ENCODE measurements at regions of chr6 and their contacts with region 1.

Region 1: GRCh38 chr6:160930547-160931377 is 60.8 kb upstream of the MAP3K4 start:
- DNase-seq: peak; percentile 64
- H3K4me3 ChIP-seq: peak overlapping the region; percentile 51
- CTCF ChIP-seq: peak; percentile 71

Region 2: GRCh38 chr6:160859822-160860221 is 70.9 kb before region 1 on chr6:
- in situ Hi-C with region 1: no loop called
- DNase-seq: no peak
- H3K4me3 ChIP-seq: no peak overlapping the region
- CTCF ChIP-seq: no peak

Region 3: DNA sequence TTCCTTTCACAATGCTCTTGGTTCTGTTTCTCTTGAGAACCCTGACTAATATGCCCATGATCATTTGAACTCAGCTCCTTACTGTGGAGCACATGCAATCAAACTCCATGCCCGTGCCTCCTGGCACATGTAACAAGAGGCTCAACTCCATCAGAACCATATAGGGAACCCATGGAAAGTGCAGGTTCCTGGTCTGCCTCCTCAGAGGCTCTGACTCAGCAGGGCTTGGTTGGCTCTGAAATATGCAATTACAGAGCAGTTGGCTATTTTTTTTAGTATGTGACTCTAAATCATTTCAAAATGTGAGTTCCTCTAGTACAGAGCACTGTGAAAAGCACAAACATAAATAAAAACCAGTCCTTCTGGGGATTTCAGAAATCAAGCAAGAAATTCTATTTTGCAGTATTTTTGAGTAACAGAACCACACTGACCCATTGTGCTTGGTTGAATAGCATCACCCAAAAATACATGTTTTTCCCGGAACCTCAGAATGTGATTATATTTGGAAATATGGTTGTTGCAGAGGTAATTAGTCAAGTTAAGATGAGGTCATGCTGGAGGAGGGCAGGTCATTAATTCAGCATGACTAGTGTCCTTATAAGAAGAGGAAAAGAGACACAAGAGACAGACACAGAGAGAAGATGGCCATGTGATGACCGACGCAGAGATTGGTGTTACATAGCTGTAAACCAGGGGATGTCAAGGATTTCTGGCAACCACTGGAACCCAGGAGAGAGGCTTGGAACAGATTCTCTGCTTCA is 47.6 kb after region 1 on chr6:
- in situ Hi-C with region 1: no loop called
- DNase-seq: no peak
- H3K4me3 ChIP-seq: no peak overlapping the region
- CTCF ChIP-seq: no peak

Region 4: GRCh38 chr6:161019324-161019839 is 88.6 kb after region 1 on chr6:
- in situ Hi-C with region 1: loop called (anchors 5 kb)
- DNase-seq: no peak
- H3K4me3 ChIP-seq: no peak overlapping the region
- CTCF ChIP-seq: no peak

Region 5: GRCh38 chr6:161257793-161258457 is 327.2 kb after region 1 on chr6:
- in situ Hi-C with region 1: loop called (anchors 10 kb)
- DNase-seq: peak; percentile 93
- H3K4me3 ChIP-seq: no peak overlapping the region
- CTCF ChIP-seq: no peak

Measured in astrocyte of the cerebellum (primary cell).